ENCODE measurements at regions of chr5 and their contacts with region 1.

Region 1: DNA sequence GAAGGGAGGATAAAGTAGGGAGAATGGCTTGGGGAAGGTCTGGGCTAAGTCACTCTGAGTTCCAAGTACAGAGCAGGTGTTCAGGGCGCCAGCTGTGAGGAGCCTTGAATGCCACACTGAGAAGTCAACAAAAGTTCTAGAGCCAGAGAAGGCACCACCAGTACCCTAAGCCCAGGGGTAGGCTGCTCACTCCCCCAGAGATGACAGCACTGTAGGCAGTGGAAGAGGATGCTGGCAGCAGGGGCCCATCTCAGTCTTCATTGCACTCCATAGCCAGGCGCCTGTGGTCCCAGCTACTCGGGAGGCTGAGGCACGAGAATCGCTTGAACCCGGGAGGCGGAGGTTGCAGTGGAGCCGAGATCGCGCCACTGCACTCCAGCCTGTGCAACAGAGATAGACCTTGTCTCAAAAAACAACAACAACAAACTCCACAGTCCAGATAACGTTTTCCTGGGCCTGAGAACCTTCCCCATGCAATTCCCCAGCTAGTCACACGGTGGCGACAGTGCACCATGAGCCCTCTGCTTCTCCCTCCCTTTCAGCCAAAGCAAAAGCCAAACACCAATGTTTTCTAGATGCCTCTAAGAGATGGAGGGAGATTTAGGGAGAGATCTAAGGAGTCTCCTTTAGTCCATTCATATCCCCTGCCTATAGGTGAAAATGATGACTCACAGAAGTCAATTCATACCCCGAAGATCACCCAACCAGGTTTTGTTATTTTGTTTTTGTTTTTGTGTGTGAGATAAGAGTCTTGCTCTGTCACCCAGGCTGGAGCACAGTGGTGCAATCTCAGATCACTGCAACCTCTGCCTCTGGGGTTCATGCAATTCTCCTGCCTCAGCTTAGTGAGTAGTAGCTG is 19.8 kb upstream of the NSD1 start:
- DNase-seq: peak; percentile 82
- ATAC-seq: peak; percentile 15
- H3K4me3 Mint-ChIP-seq: no peak overlapping the region
- H3K27ac Mint-ChIP-seq: no peak overlapping the region; the same call in 1 of the 2 replicates
- H3K4me1 Mint-ChIP-seq: peaks cover 11% of the 10 kb centered on the region
- H3K27me3 Mint-ChIP-seq: peaks cover 15% of the 10 kb centered on the region
- CTCF ChIP-seq: peak; percentile 93

Region 2: GRCh38 chr5:176985516-176985915 is 128.3 kb before region 1 on chr5:
- CTCF ChIA-PET with region 1: no interaction called
- POLR2A ChIA-PET with region 1: no interaction called
- DNase-seq: no peak
- ATAC-seq: no peak
- H3K4me3 Mint-ChIP-seq: no peak overlapping the region
- H3K27ac Mint-ChIP-seq: no peak overlapping the region
- H3K4me1 Mint-ChIP-seq: no peaks in the 10 kb centered on the region
- H3K27me3 Mint-ChIP-seq: no peaks in the 10 kb centered on the region
- CTCF ChIP-seq: no peak

Region 3: GRCh38 chr5:177071666-177072385 is 42.0 kb before region 1 on chr5:
- CTCF ChIA-PET with region 1: interaction called, 156 read pairs
- POLR2A ChIA-PET with region 1: no interaction called
- DNase-seq: peak; percentile 76
- ATAC-seq: peak; percentile 91
- H3K4me3 Mint-ChIP-seq: peak overlapping the region; percentile 8
- H3K27ac Mint-ChIP-seq: peak overlapping the region; percentile 22
- H3K4me1 Mint-ChIP-seq: peaks cover 3% of the 10 kb centered on the region
- H3K27me3 Mint-ChIP-seq: no peaks in the 10 kb centered on the region; the same call in 1 of the 2 replicates
- CTCF ChIP-seq: peak; percentile 88

Region 4: GRCh38 chr5:177086924-177087706 is 26.7 kb before region 1 on chr5:
- CTCF ChIA-PET with region 1: interaction called, 88 read pairs
- POLR2A ChIA-PET with region 1: interaction called, 4 read pairs
- DNase-seq: peak; percentile 81
- ATAC-seq: peak; percentile 69
- H3K4me3 Mint-ChIP-seq: peak overlapping the region; percentile 80
- H3K27ac Mint-ChIP-seq: no peak overlapping the region
- H3K4me1 Mint-ChIP-seq: peaks cover 37% of the 10 kb centered on the region
- H3K27me3 Mint-ChIP-seq: no peaks in the 10 kb centered on the region; the same call in 1 of the 2 replicates
- CTCF ChIP-seq: peak; percentile 68; the same call in 1 of the 2 replicates

Region 5: GRCh38 chr5:177124486-177124991 is 10.7 kb after region 1 on chr5:
- CTCF ChIA-PET with region 1: interaction called, 25 read pairs
- POLR2A ChIA-PET with region 1: no interaction called
- DNase-seq: peak; percentile 55
- ATAC-seq: peak; percentile 99
- H3K4me3 Mint-ChIP-seq: no peak overlapping the region
- H3K27ac Mint-ChIP-seq: peak overlapping the region; percentile 70; the same call in 1 of the 2 replicates
- H3K4me1 Mint-ChIP-seq: peaks cover 11% of the 10 kb centered on the region
- H3K27me3 Mint-ChIP-seq: peaks cover 5% of the 10 kb centered on the region; the same call in 1 of the 2 replicates
- CTCF ChIP-seq: no peak

Region 6: DNA sequence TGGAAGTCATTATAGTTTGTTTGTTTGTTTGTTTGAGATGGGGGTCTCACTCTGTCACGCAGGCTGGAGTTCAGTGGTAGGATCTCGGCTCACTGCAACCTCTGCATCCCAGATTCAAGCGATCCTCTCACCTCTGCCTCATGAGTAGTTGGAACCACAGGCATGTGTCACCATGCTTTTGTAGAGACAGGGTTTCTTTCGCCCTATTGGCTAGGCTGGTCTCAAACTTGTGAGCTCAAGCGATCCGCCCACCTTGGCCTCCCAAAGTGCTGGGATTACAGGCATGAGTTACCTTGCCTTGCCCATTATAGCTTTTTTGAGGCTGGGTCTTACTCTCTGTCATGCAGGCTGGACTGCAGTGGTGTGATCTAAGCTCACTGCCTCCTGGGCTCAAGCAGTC is 48.6 kb after region 1 on chr5:
- CTCF ChIA-PET with region 1: no interaction called
- POLR2A ChIA-PET with region 1: no interaction called
- DNase-seq: no peak
- ATAC-seq: peak; percentile 73
- H3K4me3 Mint-ChIP-seq: no peak overlapping the region
- H3K27ac Mint-ChIP-seq: peak overlapping the region; percentile 72
- H3K4me1 Mint-ChIP-seq: peaks cover 11% of the 10 kb centered on the region
- H3K27me3 Mint-ChIP-seq: no peaks in the 10 kb centered on the region
- CTCF ChIP-seq: no peak

Region 7: DNA sequence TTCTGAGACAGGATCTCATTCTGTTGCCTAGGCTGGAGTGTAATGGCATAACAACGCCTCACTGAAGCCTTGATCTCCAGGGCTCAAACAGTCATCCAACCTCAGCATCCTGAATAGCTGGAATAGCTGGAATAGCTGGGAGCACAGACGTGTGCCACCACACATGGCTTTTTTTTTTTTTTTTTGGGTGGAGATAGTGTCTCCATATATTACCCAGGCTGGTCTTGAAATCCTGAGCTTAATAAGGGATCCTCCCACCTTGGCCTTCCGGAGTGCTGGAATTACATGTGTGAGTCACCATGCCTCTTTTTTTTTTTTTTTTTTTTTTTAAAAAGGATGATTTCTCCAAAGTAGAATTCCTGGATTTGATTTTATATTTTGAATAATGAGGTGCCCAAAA is 80.5 kb after region 1 on chr5:
- CTCF ChIA-PET with region 1: interaction called, 11 read pairs
- POLR2A ChIA-PET with region 1: interaction called, 11 read pairs
- DNase-seq: no peak
- ATAC-seq: no peak
- H3K4me3 Mint-ChIP-seq: no peak overlapping the region
- H3K27ac Mint-ChIP-seq: no peak overlapping the region
- H3K4me1 Mint-ChIP-seq: no peaks in the 10 kb centered on the region
- H3K27me3 Mint-ChIP-seq: no peaks in the 10 kb centered on the region
- CTCF ChIP-seq: no peak